HepG2 (cell line): ENCODE measurements at regions of chr18 and their contacts with region 1.

Region 1: GRCh38 chr18:35231052-35231451 is 9.8 kb upstream of the ZNF397 start:
- DNase-seq: peak; percentile 87
- ATAC-seq: peak; percentile 97
- H3K4me3 ChIP-seq: peak overlapping the region in 2 of 3 experiments; percentile 19 to 28; a peak in 2 of 6 replicates
- H3K27ac ChIP-seq: no peak overlapping the region
- H3K4me1 ChIP-seq: no peaks in the 10 kb centered on the region
- H3K27me3 ChIP-seq: no peaks in the 10 kb centered on the region
- CTCF ChIP-seq: peak; percentile 90
- EP300 ChIP-seq: 0 out of 4 replicates have a peak, but pooled peaks of 1 of the 2 experiments have one; percentile 15
- POLR2A ChIP-seq: no peak
- RAD21 ChIP-seq: peak; percentile 85

Region 2: DNA sequence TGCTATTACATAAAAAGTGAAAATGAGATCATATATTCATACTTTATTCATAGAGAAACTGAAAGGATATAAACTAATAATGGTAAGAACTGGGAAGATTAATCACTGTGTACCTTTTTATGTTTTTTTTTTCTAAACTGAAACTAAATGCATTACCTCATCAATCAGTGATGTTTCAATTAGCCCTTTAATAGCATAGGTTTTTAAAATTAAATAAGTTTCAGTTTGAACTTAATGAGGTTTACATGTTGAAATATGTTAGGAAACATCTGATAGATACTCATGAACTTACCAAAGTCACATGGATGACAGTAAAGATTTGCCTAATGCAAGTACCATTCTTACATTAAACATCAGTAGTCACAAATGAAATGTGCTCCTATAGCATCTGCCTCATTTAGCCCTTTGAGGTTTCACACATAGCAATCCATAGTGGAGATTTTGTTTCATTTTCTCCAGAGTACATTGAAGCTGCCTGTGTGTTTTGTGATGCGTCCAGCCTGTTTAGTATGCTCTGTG is 181.0 kb before region 1 on chr18:
- CTCF ChIA-PET with region 1: no interaction called
- POLR2A ChIA-PET with region 1: no interaction called
- in situ Hi-C with region 1: no loop called
- intact Hi-C with region 1: no loop called
- DNase-seq: no peak
- ATAC-seq: no peak
- H3K4me3 ChIP-seq: no peak overlapping the region
- H3K27ac ChIP-seq: no peak overlapping the region
- H3K4me1 ChIP-seq: peaks cover 40% of the 10 kb centered on the region
- H3K27me3 ChIP-seq: no peaks in the 10 kb centered on the region
- CTCF ChIP-seq: no peak
- EP300 ChIP-seq: no peak
- POLR2A ChIP-seq: no peak
- RAD21 ChIP-seq: no peak

Region 3: GRCh38 chr18:35185771-35186170 is 45.3 kb before region 1 on chr18:
- CTCF ChIA-PET with region 1: no interaction called
- POLR2A ChIA-PET with region 1: no interaction called
- in situ Hi-C with region 1: no loop called
- intact Hi-C with region 1: no loop called
- DNase-seq: no peak
- ATAC-seq: no peak
- H3K4me3 ChIP-seq: no peak overlapping the region
- H3K27ac ChIP-seq: no peak overlapping the region
- H3K4me1 ChIP-seq: peaks cover under 1% of the 10 kb centered on the region; the same call in 1 of the 2 replicates
- H3K27me3 ChIP-seq: 0 out of 5 replicates have a peak, but pooled peaks cover 2 to 3% of the 10 kb centered on the region in 2 experiments
- CTCF ChIP-seq: peak; percentile 27
- EP300 ChIP-seq: no peak
- POLR2A ChIP-seq: no peak
- RAD21 ChIP-seq: no peak

Region 4: DNA sequence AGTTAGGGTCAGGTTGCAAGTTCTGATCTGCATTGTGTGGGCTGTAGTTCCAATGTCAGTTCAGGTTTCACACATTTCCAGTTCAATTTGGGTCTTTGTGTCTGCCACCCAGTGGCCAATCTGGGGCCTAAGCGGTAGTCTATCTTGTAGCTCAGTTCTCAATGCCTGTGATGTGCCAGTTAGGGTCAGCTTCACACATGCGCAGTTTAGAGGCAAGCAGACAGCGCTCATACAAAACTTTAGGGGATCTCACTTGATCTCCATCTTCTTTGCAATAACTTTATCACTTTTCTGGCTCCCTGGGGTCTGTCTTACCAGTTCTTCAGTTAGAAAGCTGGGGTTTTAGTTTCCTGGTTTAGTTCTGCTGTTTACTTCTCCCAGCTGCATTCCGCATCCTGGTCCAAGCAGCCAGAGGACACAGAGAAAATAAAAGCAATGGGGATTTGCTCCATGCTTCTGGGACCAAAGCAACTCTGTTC is 124.1 kb after region 1 on chr18:
- CTCF ChIA-PET with region 1: interaction called, 34 read pairs
- POLR2A ChIA-PET with region 1: no interaction called
- in situ Hi-C with region 1: loop called (anchors 5 kb)
- intact Hi-C with region 1: loop called (anchors 1 kb)
- DNase-seq: peak; percentile 85
- ATAC-seq: peak; percentile 100
- H3K4me3 ChIP-seq: peak overlapping the region in 2 of 3 experiments; percentile 25 to 38; a peak in 2 of 6 replicates
- H3K27ac ChIP-seq: no peak overlapping the region
- H3K4me1 ChIP-seq: no peaks in the 10 kb centered on the region
- H3K27me3 ChIP-seq: no peaks in the 10 kb centered on the region
- CTCF ChIP-seq: peak; percentile 92
- EP300 ChIP-seq: no peak
- POLR2A ChIP-seq: no peak
- RAD21 ChIP-seq: peak; percentile 74

Region 5: GRCh38 chr18:35386600-35387351 is 155.7 kb after region 1 on chr18:
- CTCF ChIA-PET with region 1: interaction called, 5 read pairs
- POLR2A ChIA-PET with region 1: no interaction called
- in situ Hi-C with region 1: no loop called
- intact Hi-C with region 1: loop called (anchors 1 kb)
- DNase-seq: peak; percentile 70
- ATAC-seq: peak; percentile 87
- H3K4me3 ChIP-seq: no peak overlapping the region
- H3K27ac ChIP-seq: no peak overlapping the region
- H3K4me1 ChIP-seq: peaks cover 7% of the 10 kb centered on the region
- H3K27me3 ChIP-seq: 0 out of 5 replicates have a peak, but pooled peaks cover 0 to 8% of the 10 kb centered on the region in 2 experiments
- CTCF ChIP-seq: peak; percentile 79
- EP300 ChIP-seq: no peak
- POLR2A ChIP-seq: no peak
- RAD21 ChIP-seq: peak; percentile 39